Activated CD4-positive, alpha-beta T cell treated with anti-CD3 and anti-CD28 coated beads, Interleukin-2, amount 10 ng/mL, durations not matched to agents 24 days and 14 days (primary cell): ENCODE measurements at regions of chr15 and their contacts with region 1.

Region 1: GRCh38 chr15:38563723-38564519 is 693 bp downstream of the RASGRP1 start:
- DNase-seq: peak; percentile 97
- H3K4me3 Mint-ChIP-seq: peak overlapping the region; percentile 95
- H3K27ac Mint-ChIP-seq: peak overlapping the region; percentile 99
- H3K4me1 Mint-ChIP-seq: peaks cover 61% of the 10 kb centered on the region
- H3K27me3 Mint-ChIP-seq: no peaks in the 10 kb centered on the region

Region 2: GRCh38 chr15:37793851-37794250 is 770.1 kb before region 1 on chr15:
- intact Hi-C with region 1: no loop called
- DNase-seq: no peak
- H3K4me3 Mint-ChIP-seq: no peak overlapping the region
- H3K27ac Mint-ChIP-seq: no peak overlapping the region
- H3K4me1 Mint-ChIP-seq: no peaks in the 10 kb centered on the region
- H3K27me3 Mint-ChIP-seq: no peaks in the 10 kb centered on the region

Region 3: DNA sequence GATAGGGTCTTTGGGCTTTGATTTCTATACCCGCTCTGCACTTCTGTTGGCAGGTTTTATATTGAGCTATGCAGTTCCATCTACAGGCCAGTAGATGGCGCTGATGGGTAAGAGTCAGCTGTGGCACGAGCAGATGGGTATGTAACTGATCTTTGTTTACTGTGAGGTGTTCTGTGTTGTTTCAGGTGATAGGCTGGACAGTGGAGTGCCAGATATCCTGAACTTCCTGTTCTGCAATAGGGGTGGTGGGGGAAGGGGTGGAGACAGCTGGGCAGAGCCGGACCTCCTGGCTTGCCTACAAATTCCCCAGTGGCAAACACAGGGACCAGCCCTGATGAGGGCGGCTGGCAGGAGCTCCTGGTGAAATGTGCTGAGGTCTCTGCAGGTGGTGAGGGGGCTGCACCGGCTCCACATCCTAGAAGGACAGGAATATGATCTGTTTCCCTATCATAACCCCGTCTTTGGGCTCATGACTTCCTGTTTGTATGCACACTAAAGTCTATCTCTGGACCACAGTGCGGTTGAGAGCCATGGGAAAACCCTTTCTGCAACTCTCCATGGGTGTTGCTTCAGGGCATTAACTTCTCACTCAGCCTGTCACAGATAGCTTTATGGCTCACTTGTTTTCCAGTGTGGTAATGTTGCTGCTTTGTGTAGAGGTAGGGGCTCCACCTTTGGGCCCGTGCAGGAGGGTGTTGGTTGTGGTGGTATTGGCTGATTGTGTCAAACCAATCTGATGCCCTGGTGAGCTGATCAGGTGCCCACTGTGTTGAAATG is 123.4 kb before region 1 on chr15:
- intact Hi-C with region 1: loop called (anchors 5 kb)
- DNase-seq: peak; percentile 86
- H3K4me3 Mint-ChIP-seq: no peak overlapping the region
- H3K27ac Mint-ChIP-seq: peak overlapping the region; percentile 32
- H3K4me1 Mint-ChIP-seq: peaks cover 9% of the 10 kb centered on the region
- H3K27me3 Mint-ChIP-seq: peaks cover 42% of the 10 kb centered on the region

Region 4: GRCh38 chr15:38508647-38509046 is 55.3 kb before region 1 on chr15:
- intact Hi-C with region 1: loop called (anchors 2 kb)
- DNase-seq: no peak
- H3K4me3 Mint-ChIP-seq: no peak overlapping the region
- H3K27ac Mint-ChIP-seq: peak overlapping the region; percentile 78
- H3K4me1 Mint-ChIP-seq: peaks cover 42% of the 10 kb centered on the region
- H3K27me3 Mint-ChIP-seq: no peaks in the 10 kb centered on the region

Region 5: DNA sequence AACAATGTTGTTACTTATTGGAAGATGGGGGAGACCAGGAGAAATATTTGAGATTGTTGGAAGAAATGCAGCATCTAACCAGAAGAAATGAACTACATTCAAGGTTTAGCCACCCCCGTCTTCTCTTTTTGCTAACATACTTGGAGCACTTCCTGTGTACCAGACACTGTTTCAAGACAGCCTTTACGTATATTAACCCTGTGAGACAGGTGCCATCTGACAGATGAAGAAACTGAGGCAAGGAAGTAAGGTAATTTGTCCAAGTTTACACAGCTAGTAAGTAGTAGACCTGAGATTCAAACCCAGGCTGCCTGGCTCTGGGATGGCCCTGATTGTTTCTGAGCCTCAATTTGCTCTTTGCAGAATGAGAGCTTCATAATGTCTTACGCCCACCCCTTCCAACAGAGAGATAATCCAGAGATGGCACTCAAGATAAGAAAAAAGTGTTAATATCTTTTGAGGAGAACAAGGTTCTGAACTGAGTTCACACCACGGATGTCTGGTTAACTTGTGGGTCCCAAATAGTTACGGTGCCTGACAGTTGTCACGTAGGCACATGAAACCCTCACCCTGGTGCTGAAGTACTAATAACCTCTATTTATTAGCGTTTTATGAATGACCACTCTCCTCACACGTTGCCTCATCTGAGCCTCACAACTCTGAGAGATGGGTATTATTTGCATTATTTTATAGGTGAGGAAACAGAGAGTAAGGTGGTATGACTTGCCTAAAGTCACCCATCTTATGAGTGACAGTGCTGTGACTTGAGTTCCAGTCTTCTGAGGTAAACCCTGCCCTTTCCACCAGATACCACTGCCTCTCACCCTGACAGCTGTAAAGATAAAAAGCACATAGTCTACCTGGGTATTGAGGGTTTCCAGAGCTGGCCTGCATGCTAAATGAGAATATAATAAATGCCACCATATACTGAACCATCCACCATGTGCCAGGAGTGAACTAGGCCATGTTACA is 25.3 kb before region 1 on chr15:
- intact Hi-C with region 1: loop called (anchors 2 kb)
- DNase-seq: no peak
- H3K4me3 Mint-ChIP-seq: peak overlapping the region; percentile 62
- H3K27ac Mint-ChIP-seq: peak overlapping the region; percentile 88
- H3K4me1 Mint-ChIP-seq: peaks cover 83% of the 10 kb centered on the region
- H3K27me3 Mint-ChIP-seq: no peaks in the 10 kb centered on the region

Region 6: DNA sequence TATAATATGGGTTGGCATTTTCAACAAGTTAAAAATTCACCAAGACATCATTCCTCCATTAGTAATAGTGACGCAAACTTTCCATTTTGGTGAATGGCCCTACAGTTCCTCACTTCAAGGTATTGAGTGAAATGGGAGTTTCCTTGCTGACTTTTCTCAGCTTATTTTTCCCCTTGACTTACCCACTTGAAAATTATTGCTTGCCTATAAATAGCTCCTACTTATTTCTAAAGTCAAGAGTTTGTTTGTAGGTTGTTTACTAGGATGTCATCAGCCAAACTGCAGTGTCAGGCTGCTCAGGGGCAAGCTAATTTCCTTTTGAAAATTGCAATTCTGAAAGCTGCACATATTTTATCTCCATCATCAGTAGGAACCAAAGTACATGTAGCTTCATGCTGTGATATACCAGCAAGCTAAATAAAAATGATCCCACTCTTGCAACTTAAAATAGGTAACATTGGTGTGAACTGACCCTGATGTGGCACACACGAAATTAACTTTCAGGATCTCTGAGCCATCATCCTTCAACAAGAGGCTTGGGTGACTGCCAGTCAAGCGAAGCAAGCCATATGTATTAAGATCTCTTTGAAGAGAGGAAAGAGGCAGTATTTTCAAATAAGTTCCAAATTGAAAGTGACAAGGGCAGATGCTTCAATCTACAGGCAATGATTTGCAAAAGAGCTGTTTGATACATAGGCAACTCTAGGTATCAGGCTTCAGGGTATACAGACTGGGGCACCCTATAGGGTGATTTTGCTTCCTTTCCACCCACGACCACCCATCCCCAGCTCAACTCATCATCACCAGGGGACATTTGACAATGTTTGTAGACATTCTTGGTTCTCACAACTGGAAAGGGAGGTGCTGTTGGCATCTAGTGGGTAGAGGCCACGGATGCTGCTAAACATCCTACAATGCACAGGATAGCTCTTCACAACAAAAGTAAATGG is 67.5 kb after region 1 on chr15:
- intact Hi-C with region 1: loop called (anchors 5 kb)
- DNase-seq: no peak
- H3K4me3 Mint-ChIP-seq: peak overlapping the region; percentile 53
- H3K27ac Mint-ChIP-seq: peak overlapping the region; percentile 77
- H3K4me1 Mint-ChIP-seq: peaks cover 47% of the 10 kb centered on the region
- H3K27me3 Mint-ChIP-seq: no peaks in the 10 kb centered on the region

Region 7: GRCh38 chr15:38671675-38672254 is 107.8 kb after region 1 on chr15:
- intact Hi-C with region 1: loop called (anchors 1 kb)
- DNase-seq: peak; percentile 88
- H3K4me3 Mint-ChIP-seq: peak overlapping the region; percentile 68
- H3K27ac Mint-ChIP-seq: peak overlapping the region; percentile 96
- H3K4me1 Mint-ChIP-seq: peaks cover 70% of the 10 kb centered on the region
- H3K27me3 Mint-ChIP-seq: no peaks in the 10 kb centered on the region

Region 8: DNA sequence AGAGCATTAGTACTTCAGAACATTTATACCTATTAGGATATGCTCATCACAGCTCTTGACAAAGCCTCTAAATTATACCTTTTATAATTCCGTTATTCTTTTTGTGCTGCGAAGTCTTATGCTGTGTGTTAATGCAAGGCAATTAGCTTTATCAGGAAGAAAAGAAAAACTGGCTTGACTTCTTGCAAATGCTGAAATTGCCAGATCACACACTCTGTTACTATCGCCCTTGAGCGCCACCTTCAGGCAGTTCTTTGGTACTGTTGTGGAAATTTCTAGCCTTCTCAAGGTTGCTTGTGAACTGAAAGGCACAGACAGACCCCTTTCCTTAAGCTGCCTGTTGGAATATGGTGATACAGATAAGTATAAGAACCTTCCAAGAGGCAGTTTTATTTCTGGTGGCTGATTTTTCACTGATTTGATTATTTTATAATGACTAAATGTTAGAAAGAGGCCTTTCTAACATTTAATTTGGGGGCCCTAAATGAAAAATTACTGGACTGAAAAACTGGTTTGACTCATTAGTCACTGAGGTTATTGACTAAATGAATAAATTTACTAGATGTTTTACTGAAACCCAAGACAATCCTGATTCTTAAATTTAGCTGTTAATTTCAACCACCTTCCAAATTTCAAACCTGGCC is 126.9 kb after region 1 on chr15:
- intact Hi-C with region 1: loop called (anchors 1 kb)
- DNase-seq: peak; percentile 94
- H3K4me3 Mint-ChIP-seq: no peak overlapping the region
- H3K27ac Mint-ChIP-seq: peak overlapping the region; percentile 54
- H3K4me1 Mint-ChIP-seq: peaks cover 75% of the 10 kb centered on the region
- H3K27me3 Mint-ChIP-seq: no peaks in the 10 kb centered on the region